ENCODE measurements at regions of chrX and their contacts with region 1.

Region 1: GRCh38 chrX:150772150-150772970 is 79.2 kb downstream of the MTMR1 start:
- DNase-seq: peak; percentile 21
- H3K4me3 ChIP-seq: no peak overlapping the region
- H3K27ac ChIP-seq: no peak overlapping the region
- H3K27me3 ChIP-seq: no peaks in the 10 kb centered on the region
- CTCF ChIP-seq: peak; percentile 83

Region 2: DNA sequence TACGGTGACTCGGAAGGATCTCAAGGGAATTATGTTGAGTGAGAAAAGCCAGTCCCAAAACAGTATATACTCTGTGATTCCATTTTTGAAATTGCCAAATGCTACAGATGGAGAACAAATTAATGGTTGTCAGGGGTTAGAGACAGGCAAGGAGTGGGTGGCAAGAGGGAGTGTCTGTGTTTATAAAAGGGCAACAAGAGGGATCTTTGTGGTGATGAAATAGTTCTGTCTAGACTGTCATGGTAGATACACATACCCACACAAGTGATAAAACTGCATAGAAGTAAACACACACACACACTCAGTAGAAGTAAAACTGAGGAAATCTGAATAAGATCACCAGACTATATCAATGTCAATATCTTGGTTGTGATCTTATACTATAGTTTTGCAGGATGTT is 33.4 kb after region 1 on chrX:
- CTCF ChIA-PET with region 1: no interaction called
- POLR2A ChIA-PET with region 1: no interaction called
- DNase-seq: no peak
- H3K4me3 ChIP-seq: no peak overlapping the region
- H3K27ac ChIP-seq: no peak overlapping the region
- H3K27me3 ChIP-seq: no peaks in the 10 kb centered on the region
- CTCF ChIP-seq: no peak

Region 3: GRCh38 chrX:150833454-150834056 is 61.2 kb after region 1 on chrX:
- CTCF ChIA-PET with region 1: no interaction called
- POLR2A ChIA-PET with region 1: no interaction called
- DNase-seq: no peak
- H3K4me3 ChIP-seq: no peak overlapping the region
- H3K27ac ChIP-seq: no peak overlapping the region
- H3K27me3 ChIP-seq: no peaks in the 10 kb centered on the region
- CTCF ChIP-seq: no peak

Region 4: DNA sequence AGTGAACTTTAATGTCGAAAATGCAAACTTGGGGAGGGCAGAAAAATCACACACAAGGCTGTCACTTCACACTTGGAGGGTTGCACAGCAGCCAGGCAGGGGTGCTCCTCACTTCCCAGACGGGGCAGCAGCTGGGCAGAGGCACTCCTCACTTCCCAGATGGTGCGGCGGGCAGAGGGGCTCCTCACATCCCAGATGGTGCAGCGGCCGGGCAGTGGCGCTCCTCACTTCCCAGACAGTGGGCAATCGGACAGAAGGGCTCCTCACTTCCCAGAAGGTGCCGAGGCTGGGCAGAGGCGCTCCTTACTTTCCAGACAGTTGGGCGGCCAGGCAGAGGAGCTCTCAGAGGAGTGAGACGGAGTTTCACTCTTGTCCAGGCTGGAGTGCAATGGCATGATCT is 301.4 kb after region 1 on chrX:
- CTCF ChIA-PET with region 1: interaction called, 17 read pairs
- POLR2A ChIA-PET with region 1: no interaction called
- DNase-seq: no peak
- H3K4me3 ChIP-seq: no peak overlapping the region
- H3K27ac ChIP-seq: no peak overlapping the region
- H3K27me3 ChIP-seq: no peaks in the 10 kb centered on the region
- CTCF ChIP-seq: no peak

Region 5: GRCh38 chrX:151082076-151082948 is 310.0 kb after region 1 on chrX:
- CTCF ChIA-PET with region 1: interaction called, 205 read pairs
- POLR2A ChIA-PET with region 1: no interaction called
- DNase-seq: peak; percentile 6
- H3K4me3 ChIP-seq: peak overlapping the region; percentile 29; the same call in 1 of the 2 replicates
- H3K27ac ChIP-seq: no peak overlapping the region
- H3K27me3 ChIP-seq: peaks cover 2% of the 10 kb centered on the region
- CTCF ChIP-seq: peak; percentile 85